H1 (cell line): ENCODE measurements at regions of chr7 and their contacts with region 1.

Region 1: GRCh38 chr7:4164556-4164955 is 517.5 kb upstream of the FOXK1 start:
- DNase-seq: no peak
- H3K4me3 ChIP-seq: no peak overlapping the region
- H3K27ac ChIP-seq: no peak overlapping the region
- H3K4me1 ChIP-seq: peaks cover 0 to 6% (median 3%) of the 10 kb centered on the region in 4 experiments; a peak in 2 of 7 replicates
- H3K27me3 ChIP-seq: no peaks in the 10 kb centered on the region
- CTCF ChIP-seq: peak in 1 of 3 experiments; percentile 23; a peak in 2 of 4 replicates
- EP300 ChIP-seq: no peak
- POLR2A ChIP-seq: no peak
- RAD21 ChIP-seq: no peak; a peak in 1 of 4 replicates

Region 2: DNA sequence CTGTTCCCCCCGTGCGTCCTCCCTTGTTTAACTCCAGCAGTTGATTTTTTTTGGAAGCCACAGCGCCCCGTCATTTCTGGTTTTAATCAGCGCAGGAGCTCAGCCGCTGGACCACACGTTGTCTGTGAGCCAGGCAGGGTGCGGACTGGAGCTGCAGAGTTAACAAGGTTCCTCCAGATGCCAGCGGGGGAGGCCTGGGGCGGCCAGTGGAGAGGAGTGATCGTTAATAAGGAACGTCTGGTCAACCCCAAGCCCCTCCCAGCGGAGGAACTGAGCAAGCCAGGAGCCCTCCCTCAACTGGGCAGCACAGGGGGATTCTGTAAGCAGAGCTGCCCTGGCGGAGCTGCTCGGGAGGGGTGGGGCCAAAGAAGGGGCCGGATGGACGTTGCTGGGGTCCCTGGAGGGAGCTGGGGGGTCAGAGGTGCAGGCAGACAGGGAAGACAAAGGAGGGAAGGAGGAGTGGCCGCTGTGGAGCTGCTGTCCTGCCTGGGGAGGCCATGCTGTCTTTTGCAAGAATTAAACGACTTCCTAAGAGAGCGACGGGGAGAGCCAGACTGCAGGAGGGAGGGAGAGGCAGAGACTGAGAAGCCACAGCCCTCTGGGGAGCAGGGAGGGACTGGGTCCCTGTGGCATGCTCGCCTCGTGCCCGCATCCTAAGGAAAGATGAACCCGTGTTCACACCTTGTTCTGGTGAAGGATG is 19.6 kb before region 1 on chr7:
- CTCF ChIA-PET with region 1: interaction called, 10 read pairs
- POLR2A ChIA-PET with region 1: interaction called, 4 read pairs
- DNase-seq: peak in 1 of 2 experiments; percentile 68
- H3K4me3 ChIP-seq: peak overlapping the region in 1 of 4 experiments; percentile 20; a peak in 1 of 8 replicates
- H3K27ac ChIP-seq: no peak overlapping the region
- H3K4me1 ChIP-seq: peaks cover 0 to 33% (median 17%) of the 10 kb centered on the region in 4 experiments; a peak in 6 of 7 replicates
- H3K27me3 ChIP-seq: no peaks in the 10 kb centered on the region
- CTCF ChIP-seq: no peak
- EP300 ChIP-seq: no peak
- POLR2A ChIP-seq: no peak
- RAD21 ChIP-seq: no peak

Region 3: DNA sequence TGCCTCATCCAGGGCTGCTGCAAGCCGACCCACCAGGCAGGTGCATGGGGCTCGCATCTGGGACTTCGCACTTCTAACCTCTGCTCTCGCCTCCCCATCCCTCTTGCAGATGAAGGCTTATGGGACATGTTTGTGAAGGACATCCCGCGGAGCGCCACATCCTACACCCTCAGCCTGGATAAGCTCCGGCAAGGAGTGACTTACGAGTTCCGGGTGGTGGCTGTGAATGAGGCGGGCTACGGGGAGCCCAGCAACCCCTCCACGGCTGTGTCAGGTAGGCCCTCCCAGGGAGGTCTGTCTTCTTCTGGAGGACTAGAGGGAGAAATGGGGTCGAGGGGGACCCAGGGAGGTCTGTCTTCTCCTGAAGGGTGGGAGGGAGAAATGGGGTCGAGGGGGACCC is 68.6 kb after region 1 on chr7:
- CTCF ChIA-PET with region 1: no interaction called
- POLR2A ChIA-PET with region 1: no interaction called
- DNase-seq: no peak
- H3K4me3 ChIP-seq: no peak overlapping the region
- H3K27ac ChIP-seq: no peak overlapping the region
- H3K4me1 ChIP-seq: no peaks in the 10 kb centered on the region
- H3K27me3 ChIP-seq: no peaks in the 10 kb centered on the region
- CTCF ChIP-seq: no peak
- EP300 ChIP-seq: no peak
- POLR2A ChIP-seq: no peak
- RAD21 ChIP-seq: no peak

Region 4: DNA sequence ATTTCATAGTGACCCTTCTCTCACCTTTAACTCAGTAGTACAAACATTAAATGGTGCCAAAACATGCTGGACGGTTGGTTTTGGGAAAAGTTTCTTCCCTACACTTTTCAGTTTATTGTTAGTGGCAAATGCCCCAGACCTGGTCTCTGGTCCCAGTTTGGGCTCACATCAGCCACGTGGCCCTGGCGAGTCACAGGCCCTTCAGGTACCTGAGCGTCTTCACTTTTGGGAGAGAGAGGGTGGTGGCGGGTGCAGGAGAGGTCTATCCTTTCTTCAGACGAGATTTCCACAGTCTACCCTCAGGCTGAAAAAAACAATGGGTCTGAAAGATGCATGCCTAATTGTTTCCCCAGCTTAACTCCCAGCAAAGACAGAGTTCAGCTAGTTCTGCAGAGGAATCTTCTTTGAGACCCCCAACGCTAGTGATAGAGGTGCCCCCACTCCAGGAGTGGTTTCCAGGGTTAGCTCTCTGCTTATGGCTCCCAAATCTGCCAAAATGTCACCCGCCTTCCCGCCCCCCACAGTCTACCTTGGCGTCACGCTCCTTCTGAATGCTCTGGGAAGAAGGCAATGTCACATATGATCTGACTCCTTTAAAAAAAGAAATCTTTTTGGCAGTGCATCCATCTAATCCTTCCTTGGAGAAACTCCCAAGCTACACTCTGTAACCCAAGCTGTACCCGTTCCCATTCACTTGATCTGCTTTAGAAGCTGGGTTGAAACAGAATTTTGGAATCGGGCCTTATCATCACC is 132.8 kb after region 1 on chr7:
- CTCF ChIA-PET with region 1: no interaction called
- POLR2A ChIA-PET with region 1: no interaction called
- DNase-seq: peak in 1 of 2 experiments; percentile 19
- H3K4me3 ChIP-seq: no peak overlapping the region
- H3K27ac ChIP-seq: no peak overlapping the region
- H3K4me1 ChIP-seq: no peaks in the 10 kb centered on the region
- H3K27me3 ChIP-seq: no peaks in the 10 kb centered on the region
- CTCF ChIP-seq: no peak
- EP300 ChIP-seq: no peak
- POLR2A ChIP-seq: no peak
- RAD21 ChIP-seq: no peak